ENCODE measurements at regions of chr10 and their contacts with region 1.

Region 1: DNA sequence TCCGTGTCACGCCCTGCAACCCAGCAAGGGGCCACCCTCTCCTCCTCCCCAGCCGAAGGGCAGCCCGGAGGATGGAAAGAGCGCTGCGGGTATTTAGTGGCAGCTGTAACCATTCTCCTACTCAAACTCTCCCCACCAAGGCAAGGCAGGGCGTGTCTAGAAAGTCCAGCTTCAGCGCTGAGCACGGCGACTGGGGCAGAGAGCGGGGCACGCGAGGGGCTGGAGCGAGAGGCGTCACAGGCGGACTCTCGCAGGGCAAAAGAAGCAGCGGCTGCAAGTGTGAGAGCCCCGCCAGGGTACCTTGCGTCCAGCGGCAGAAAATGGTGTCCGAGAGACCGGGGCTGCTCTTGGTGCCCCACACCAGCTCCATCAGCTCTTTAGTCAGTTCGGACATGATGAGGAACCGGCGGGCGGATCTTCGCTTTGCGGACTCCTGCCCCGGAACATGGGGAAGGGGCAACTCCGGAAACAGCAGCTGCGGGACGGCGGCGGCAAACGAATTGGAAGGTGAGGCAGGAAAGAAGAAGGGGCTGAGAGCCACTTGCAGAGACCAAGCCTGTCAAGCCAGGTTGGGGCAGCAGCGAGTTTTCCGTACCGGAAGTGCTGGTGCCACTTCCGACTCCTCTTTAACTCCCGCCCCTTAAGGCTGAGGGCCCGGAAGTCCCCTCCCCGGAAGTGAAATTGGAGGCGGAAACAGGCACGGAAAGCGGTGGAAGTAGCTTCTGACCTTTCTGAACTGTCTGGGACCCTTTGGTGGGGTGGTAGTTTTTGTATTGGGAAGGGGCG is at the start of gene MINDY3:
- DNase-seq: peak; percentile 88
- ATAC-seq: peak; percentile 94
- H3K4me3 Mint-ChIP-seq: peak within 1 kb of the TSS; percentile 88
- H3K27ac Mint-ChIP-seq: peak within 1 kb of the TSS; percentile 93
- H3K4me1 Mint-ChIP-seq: peaks cover 32% of the 10 kb centered on the region
- H3K27me3 Mint-ChIP-seq: peaks cover 10% of the 10 kb centered on the region
- total RNA-seq, gene MINDY3: 11.5 to 12.8 TPM

Region 2: GRCh38 chr10:15836807-15837206 is 23.3 kb before region 1 on chr10:
- CTCF ChIA-PET with region 1: interaction called, 4 read pairs
- POLR2A ChIA-PET with region 1: no interaction called
- intact Hi-C with region 1: loop called in 1 of 2 experiments (anchors 2 kb)
- DNase-seq: no peak
- ATAC-seq: peak; percentile 33
- H3K4me3 Mint-ChIP-seq: no peak overlapping the region
- H3K27ac Mint-ChIP-seq: no peak overlapping the region
- H3K4me1 Mint-ChIP-seq: peaks cover 5% of the 10 kb centered on the region
- H3K27me3 Mint-ChIP-seq: no peaks in the 10 kb centered on the region

Region 3: DNA sequence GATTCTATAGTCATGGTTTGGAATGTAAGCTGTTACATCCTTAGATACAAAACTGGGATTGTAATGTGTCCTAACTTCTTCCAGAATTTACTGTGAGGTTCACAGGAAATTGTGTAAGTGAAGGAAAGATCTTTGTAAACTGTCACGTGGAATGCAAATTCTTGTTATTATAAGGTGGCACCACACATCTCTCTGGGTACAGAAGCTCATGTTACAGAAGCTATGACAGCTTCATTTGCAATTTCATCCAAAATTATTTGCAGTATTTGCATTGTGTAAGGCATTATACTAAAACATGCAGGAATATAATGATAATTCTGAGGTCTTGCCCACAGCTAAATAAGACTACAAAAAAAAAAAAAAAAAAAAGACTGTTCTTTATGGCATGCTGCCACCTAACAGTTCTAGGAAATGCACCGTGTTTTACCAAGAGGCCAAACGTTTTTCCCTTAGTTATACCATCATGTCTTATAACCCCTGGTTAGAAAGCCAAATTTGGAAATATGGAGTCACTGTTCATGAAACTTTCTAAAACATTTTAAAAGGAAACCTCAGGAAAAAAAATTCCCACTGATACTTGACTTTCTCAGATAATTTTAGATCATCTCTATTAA is 17.4 kb before region 1 on chr10:
- CTCF ChIA-PET with region 1: interaction called, 11 read pairs
- POLR2A ChIA-PET with region 1: interaction called, 3 read pairs
- intact Hi-C with region 1: loop called in 1 of 2 experiments (anchors 2 kb)
- DNase-seq: no peak
- ATAC-seq: no peak
- H3K4me3 Mint-ChIP-seq: no peak overlapping the region
- H3K27ac Mint-ChIP-seq: no peak overlapping the region
- H3K4me1 Mint-ChIP-seq: peaks cover 14% of the 10 kb centered on the region
- H3K27me3 Mint-ChIP-seq: no peaks in the 10 kb centered on the region

Region 4: GRCh38 chr10:15931375-15931774 is 71.3 kb after region 1 on chr10:
- CTCF ChIA-PET with region 1: no interaction called
- POLR2A ChIA-PET with region 1: no interaction called
- intact Hi-C with region 1: no loop called
- DNase-seq: no peak
- ATAC-seq: no peak
- H3K4me3 Mint-ChIP-seq: no peak overlapping the region
- H3K27ac Mint-ChIP-seq: no peak overlapping the region
- H3K4me1 Mint-ChIP-seq: no peaks in the 10 kb centered on the region
- H3K27me3 Mint-ChIP-seq: peaks cover 26% of the 10 kb centered on the region

Region 5: GRCh38 chr10:16787361-16787791 is 927.3 kb after region 1 on chr10:
- CTCF ChIA-PET with region 1: no interaction called
- POLR2A ChIA-PET with region 1: no interaction called
- intact Hi-C with region 1: loop called in 1 of 2 experiments (anchors 5 kb)
- DNase-seq: peak; percentile 77
- ATAC-seq: peak; percentile 95
- H3K4me3 Mint-ChIP-seq: peak overlapping the region; percentile 63
- H3K27ac Mint-ChIP-seq: peak overlapping the region; percentile 96
- H3K4me1 Mint-ChIP-seq: peaks cover 31% of the 10 kb centered on the region
- H3K27me3 Mint-ChIP-seq: no peaks in the 10 kb centered on the region